PC-3 (cell line): ENCODE measurements at regions of chr16 and their contacts with region 1.

Region 1: GRCh38 chr16:14249291-14250032 is 178.3 kb downstream of the MRTFB start:
- DNase-seq: peak; percentile 54
- ATAC-seq: no peak
- H3K4me3 ChIP-seq: no peak overlapping the region
- H3K27ac ChIP-seq: no peak overlapping the region
- H3K4me1 ChIP-seq: no peaks in the 10 kb centered on the region
- H3K27me3 ChIP-seq: no peaks in the 10 kb centered on the region
- CTCF ChIP-seq: peak; percentile 85

Region 2: DNA sequence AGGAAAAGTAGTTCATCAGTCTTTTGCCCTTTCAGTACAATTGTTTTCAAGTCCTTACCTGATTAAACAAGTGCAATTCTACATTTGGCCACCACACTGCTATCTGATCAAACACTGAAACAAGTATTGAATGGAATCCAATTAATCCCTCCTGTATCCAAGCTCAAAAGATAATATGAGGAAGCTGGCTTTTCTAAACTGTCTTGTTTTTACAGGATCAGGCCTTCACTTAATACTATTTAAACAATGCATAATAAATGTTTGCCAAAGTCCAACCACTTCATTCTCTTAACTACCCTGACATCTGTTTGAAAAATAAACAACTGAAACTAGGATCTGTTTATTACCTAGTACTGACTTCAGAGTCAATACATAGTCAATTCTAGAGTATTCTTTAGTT is 46.8 kb before region 1 on chr16:
- CTCF ChIA-PET with region 1: no interaction called
- POLR2A ChIA-PET with region 1: no interaction called
- intact Hi-C with region 1: no loop called
- DNase-seq: peak; percentile 19
- ATAC-seq: peak; percentile 27; the same call in 1 of the 2 replicates
- H3K4me3 ChIP-seq: no peak overlapping the region
- H3K27ac ChIP-seq: no peak overlapping the region
- H3K4me1 ChIP-seq: peaks cover 11% of the 10 kb centered on the region
- H3K27me3 ChIP-seq: no peaks in the 10 kb centered on the region
- CTCF ChIP-seq: peak; percentile 48; the same call in 1 of the 2 replicates

Region 3: DNA sequence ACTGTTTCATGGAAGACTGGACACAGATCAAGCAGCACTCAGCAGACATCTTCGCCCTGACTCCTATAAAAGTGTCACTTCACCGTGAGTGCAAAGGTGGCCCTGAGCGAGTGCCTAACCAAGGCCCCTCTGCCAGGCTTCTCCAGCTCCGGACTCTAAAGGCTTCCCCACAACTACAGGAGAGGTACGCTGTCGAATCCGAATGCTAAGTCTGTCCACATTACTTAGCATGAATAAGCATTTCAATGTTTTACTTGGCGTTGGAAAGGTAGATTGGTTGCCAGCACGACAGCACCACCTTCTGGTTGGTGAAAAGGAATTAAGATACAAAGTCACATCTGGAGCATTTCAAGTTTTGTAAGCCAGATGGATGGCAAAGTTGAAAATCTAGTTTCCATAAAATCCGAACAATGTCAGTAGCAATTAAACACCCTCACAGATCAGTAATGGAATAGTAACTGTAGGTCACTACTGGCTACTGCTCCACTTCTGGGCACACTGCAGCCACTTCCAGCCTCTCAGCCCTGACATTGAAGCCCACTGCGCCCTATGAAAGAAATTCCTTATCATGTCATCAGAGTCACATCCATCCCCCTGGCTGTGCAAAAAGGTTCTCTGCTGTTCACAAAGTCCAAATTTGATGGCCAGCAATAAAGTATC is 279.7 kb after region 1 on chr16:
- CTCF ChIA-PET with region 1: no interaction called
- POLR2A ChIA-PET with region 1: no interaction called
- intact Hi-C with region 1: loop called (anchors 2 kb)
- DNase-seq: peak; percentile 80
- ATAC-seq: peak; percentile 84
- H3K4me3 ChIP-seq: no peak overlapping the region; the same call in 1 of the 2 replicates
- H3K27ac ChIP-seq: peak overlapping the region; percentile 37
- H3K4me1 ChIP-seq: peaks cover 12% of the 10 kb centered on the region
- H3K27me3 ChIP-seq: no peaks in the 10 kb centered on the region
- CTCF ChIP-seq: peak; percentile 82